Activated CD4-positive, alpha-beta memory T cell treated with anti-CD3 and anti-CD28 coated beads, Interleukin-2, amount 10 ng/mL, durations not matched to agents 7 days and 5 days (primary cell): ENCODE measurements at regions of chr20 and their contacts with region 1.

Region 1: GRCh38 chr20:1325173-1326030 is 3.5 kb downstream of the SDCBP2 start:
- DNase-seq: peak; percentile 99
- H3K4me3 Mint-ChIP-seq: no peak overlapping the region
- H3K27ac Mint-ChIP-seq: no peak overlapping the region
- H3K4me1 Mint-ChIP-seq: peaks cover 23% of the 10 kb centered on the region
- H3K27me3 Mint-ChIP-seq: no peaks in the 10 kb centered on the region

Region 2: DNA sequence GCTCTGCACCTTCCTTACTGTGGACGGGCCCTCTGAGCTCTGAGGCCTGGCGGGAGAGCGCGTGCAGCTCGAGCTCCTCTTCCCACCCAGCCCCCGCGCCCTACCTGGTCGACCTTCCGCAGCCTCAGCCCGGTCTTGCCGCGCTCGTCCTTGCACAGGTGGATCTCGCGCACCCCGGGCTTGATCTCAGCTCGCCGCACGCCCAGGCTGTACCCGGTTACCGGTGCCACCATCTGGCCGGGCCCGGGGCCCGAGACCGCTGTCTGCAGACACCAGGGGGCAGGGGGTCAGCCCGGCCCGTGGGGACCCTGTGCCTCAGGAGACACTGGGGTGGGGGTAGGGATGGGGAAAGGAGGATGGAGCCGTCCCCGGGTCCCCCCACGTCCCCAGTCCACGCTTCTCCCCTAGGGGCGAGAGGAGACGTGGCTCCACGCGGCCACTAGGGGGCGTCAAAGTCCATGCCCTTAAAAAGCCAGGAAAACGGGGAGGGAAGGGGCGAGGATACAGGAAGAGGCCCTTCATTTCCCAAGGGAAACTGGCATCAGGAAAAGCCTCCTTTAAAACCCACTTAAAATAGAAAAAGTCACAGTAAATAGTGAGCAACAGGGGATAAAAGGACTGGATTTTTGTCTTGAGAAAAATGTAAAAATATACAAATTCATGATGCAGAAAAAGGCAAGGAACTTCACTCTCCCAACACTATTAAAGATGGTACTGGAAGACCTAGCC is 12.0 kb before region 1 on chr20:
- CTCF ChIA-PET with region 1: interaction called, 12 read pairs
- POLR2A ChIA-PET with region 1: interaction called, 5 read pairs
- DNase-seq: peak; percentile 61
- H3K4me3 Mint-ChIP-seq: no peak overlapping the region
- H3K27ac Mint-ChIP-seq: no peak overlapping the region
- H3K4me1 Mint-ChIP-seq: peaks cover 16% of the 10 kb centered on the region
- H3K27me3 Mint-ChIP-seq: peaks cover 2% of the 10 kb centered on the region

Region 3: GRCh38 chr20:1357921-1358671 is 32.7 kb after region 1 on chr20:
- CTCF ChIA-PET with region 1: interaction called, 4 read pairs
- POLR2A ChIA-PET with region 1: interaction called, 12 read pairs
- DNase-seq: peak; percentile 61
- H3K4me3 Mint-ChIP-seq: peak overlapping the region; percentile 56
- H3K27ac Mint-ChIP-seq: peak overlapping the region; percentile 87
- H3K4me1 Mint-ChIP-seq: peaks cover 53% of the 10 kb centered on the region
- H3K27me3 Mint-ChIP-seq: no peaks in the 10 kb centered on the region

Region 4: GRCh38 chr20:1392823-1393506 is 67.6 kb after region 1 on chr20 and contains the start of gene FKBP1A:
- CTCF ChIA-PET with region 1: interaction called, 5 read pairs
- POLR2A ChIA-PET with region 1: interaction called, 47 read pairs
- DNase-seq: peak; percentile 93
- H3K4me3 Mint-ChIP-seq: peak within 1 kb of the TSS; percentile 84
- H3K27ac Mint-ChIP-seq: peak within 1 kb of the TSS; percentile 83
- H3K4me1 Mint-ChIP-seq: peaks cover 59% of the 10 kb centered on the region
- H3K27me3 Mint-ChIP-seq: peaks cover 25% of the 10 kb centered on the region
- total RNA-seq, gene FKBP1A: 205 to 207 TPM

Region 5: GRCh38 chr20:1450926-1451491 is 125.6 kb after region 1 on chr20:
- CTCF ChIA-PET with region 1: no interaction called
- POLR2A ChIA-PET with region 1: no interaction called
- DNase-seq: no peak
- H3K4me3 Mint-ChIP-seq: no peak overlapping the region
- H3K27ac Mint-ChIP-seq: no peak overlapping the region
- H3K4me1 Mint-ChIP-seq: no peaks in the 10 kb centered on the region
- H3K27me3 Mint-ChIP-seq: no peaks in the 10 kb centered on the region

Region 6: GRCh38 chr20:1466211-1467081 is 141.0 kb after region 1 on chr20 and contains the start of gene NSFL1C:
- CTCF ChIA-PET with region 1: interaction called, 3 read pairs
- POLR2A ChIA-PET with region 1: interaction called, 16 read pairs
- DNase-seq: peak; percentile 98
- H3K4me3 Mint-ChIP-seq: peak within 1 kb of the TSS; percentile 85
- H3K27ac Mint-ChIP-seq: peak within 1 kb of the TSS; percentile 68
- H3K4me1 Mint-ChIP-seq: peaks cover 43% of the 10 kb centered on the region
- H3K27me3 Mint-ChIP-seq: peaks cover 20% of the 10 kb centered on the region
- total RNA-seq, gene NSFL1C: 49.2 to 49.6 TPM